HEK293 (cell line): ENCODE measurements at regions of chr19 and their contacts with region 1.

Region 1: DNA sequence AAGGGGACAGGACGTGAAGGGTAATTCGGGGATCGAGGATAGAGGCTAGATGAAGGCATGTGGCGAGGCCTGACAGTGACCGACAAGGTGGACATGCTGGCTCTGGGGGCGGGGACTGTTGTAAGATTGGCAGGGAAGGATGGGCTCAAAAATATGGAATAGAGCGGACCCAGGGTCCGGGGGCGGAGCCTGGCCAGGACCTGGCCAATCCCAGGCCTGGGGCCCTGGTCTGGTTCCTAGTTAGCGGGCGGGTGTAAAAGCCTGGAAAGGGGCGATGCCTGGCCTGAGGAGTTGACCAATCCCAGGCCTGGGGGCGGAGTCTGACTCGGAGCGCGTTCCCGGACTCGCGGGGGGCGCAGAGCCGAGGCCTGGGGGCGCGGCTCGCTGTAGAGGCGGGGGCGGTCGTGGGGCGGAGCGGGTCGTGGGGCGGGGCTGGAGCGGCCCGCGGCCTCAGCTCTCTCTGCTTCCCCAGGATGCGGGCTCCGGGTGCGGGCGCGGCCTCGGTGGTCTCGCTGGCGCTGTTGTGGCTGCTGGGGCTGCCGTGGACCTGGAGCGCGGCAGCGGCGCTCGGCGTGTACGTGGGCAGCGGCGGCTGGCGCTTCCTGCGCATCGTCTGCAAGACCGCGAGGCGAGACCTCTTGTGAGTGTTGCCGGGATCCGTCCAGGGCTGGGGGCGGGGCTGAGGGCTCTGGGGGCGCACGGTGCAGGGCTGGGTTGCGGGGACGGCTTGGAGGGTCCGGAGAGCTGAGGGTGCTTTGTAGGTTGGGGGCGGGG is at the start of gene SLC27A1:
- H3K4me3 ChIP-seq: peak within 1 kb of the TSS; percentile 58
- H3K27ac ChIP-seq: no peak within 1 kb of the TSS
- H3K4me1 ChIP-seq: peaks cover 6% of the 10 kb centered on the region; the same call in 1 of the 2 replicates
- CTCF ChIP-seq: peak; percentile 27; the same call in 1 of the 2 replicates

Region 2: GRCh38 chr19:17441241-17442021 is 28.8 kb before region 1 on chr19:
- CTCF ChIA-PET with region 1: interaction called, 53 read pairs
- POLR2A ChIA-PET with region 1: interaction called, 3 read pairs
- H3K4me3 ChIP-seq: no peak overlapping the region
- H3K27ac ChIP-seq: no peak overlapping the region
- H3K4me1 ChIP-seq: no peaks in the 10 kb centered on the region
- CTCF ChIP-seq: peak; percentile 83

Region 3: DNA sequence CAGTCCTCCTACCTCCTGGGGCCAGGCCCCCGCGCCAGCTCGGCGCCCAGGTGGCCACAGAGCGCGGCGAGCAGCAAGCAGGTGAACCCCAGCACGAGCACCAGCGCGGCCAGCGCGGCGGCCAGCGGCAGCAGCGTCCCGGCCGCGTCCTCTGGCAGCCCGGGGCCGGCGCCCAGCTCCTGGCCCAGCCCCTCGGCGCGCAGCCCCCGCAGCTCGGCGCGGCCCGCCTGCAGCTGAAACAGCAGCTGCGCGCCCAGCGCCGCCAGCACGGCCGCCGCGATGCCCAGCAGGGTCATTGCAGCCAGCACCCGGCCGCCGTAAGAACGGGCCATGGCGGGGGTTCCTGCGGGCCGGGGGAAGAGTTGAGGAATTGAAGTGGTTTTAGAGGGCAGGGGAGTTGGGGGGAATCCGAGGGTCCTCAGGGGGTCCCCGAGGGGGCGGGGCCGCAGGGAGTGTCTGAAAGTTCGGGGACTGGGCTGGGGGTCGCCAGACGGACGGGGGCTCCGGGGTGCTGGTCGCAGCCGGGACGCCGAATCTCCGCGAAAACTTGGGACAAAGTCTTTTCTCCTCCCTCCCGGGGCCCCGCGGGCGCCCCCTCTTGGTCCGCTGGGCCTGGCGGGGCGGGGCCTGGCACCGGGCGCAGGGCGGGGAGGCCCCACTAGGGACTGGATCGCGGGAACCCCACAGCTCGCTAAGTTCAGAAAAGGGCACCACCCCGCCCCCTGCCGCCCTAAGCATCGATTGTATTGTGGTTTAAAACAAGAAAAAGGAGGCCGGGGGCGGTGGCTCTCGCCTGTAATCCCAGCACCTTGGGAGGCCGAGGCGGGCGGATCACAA is 21.9 kb before region 1 on chr19 and contains the start of gene TMEM221:
- CTCF ChIA-PET with region 1: interaction called, 53 read pairs
- POLR2A ChIA-PET with region 1: no interaction called
- H3K4me3 ChIP-seq: peak within 1 kb of the TSS; percentile 43
- H3K27ac ChIP-seq: peak within 1 kb of the TSS; percentile 21; the same call in 1 of the 2 replicates
- H3K4me1 ChIP-seq: no peaks in the 10 kb centered on the region
- CTCF ChIP-seq: peak; percentile 82

Region 4: DNA sequence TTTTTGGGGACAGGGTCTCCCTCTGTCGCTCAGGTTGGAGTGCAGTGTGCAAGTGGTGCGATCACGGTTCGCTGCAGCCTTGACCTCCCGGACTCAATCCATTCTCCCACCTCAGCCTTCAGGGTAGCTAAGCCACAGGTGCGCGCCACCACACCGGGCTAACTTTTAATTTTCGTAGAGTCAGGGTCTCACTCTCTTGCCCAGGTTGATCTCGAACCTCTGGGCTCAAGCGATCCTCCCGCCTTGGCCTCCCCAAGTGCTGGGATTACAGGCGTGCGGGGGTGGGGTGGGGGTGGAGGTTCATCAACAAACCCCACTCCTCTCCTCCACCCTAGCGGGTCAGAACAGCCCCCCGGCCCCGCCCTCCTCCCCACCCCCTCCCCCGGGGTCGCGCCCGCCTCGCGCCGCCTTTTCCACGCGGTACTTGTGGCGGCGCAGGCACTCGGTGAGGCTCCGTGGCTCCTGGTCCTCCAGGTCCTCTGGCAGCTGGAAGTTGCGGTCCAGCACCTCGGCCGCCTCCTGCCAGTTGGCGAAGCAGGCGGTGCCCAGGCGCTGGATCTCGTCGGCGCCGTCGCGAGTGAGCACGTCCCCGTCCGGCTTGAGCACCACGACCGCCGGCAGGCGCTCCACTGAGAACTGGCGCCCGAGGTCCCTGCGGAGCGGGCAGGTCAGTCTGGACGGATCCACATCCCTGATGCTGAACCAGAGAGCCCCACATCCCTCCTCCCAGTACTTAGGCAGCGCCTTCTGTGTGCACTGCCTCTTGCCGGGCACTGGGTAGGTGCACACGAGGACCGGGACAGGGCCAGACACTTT is 14.7 kb before region 1 on chr19:
- CTCF ChIA-PET with region 1: interaction called, 11 read pairs
- POLR2A ChIA-PET with region 1: no interaction called
- H3K4me3 ChIP-seq: no peak overlapping the region
- H3K27ac ChIP-seq: no peak overlapping the region
- H3K4me1 ChIP-seq: no peaks in the 10 kb centered on the region
- CTCF ChIP-seq: no peak

Region 5: GRCh38 chr19:17579661-17580244 is 109.5 kb after region 1 on chr19:
- CTCF ChIA-PET with region 1: no interaction called
- POLR2A ChIA-PET with region 1: no interaction called
- H3K4me3 ChIP-seq: no peak overlapping the region
- H3K27ac ChIP-seq: no peak overlapping the region
- H3K4me1 ChIP-seq: no peaks in the 10 kb centered on the region
- CTCF ChIP-seq: no peak